Activated CD8-positive, alpha-beta T cell treated with anti-CD3 and anti-CD28 coated beads, Interleukin-2, amount 10 ng/mL, durations not matched to agents 7 days and 5 days (primary cell): ENCODE measurements at regions of chr9 and their contacts with region 1.

Region 1: GRCh38 chr9:19085295-19085694 is 17.4 kb downstream of the HAUS6 start:
- DNase-seq: no peak
- ATAC-seq: peak; percentile 80
- H3K4me3 Mint-ChIP-seq: no peak overlapping the region
- H3K27ac Mint-ChIP-seq: no peak overlapping the region
- H3K4me1 Mint-ChIP-seq: no peaks in the 10 kb centered on the region
- H3K27me3 Mint-ChIP-seq: no peaks in the 10 kb centered on the region

Region 2: GRCh38 chr9:19252174-19252884 is 167.0 kb after region 1 on chr9:
- CTCF ChIA-PET with region 1: no interaction called
- POLR2A ChIA-PET with region 1: no interaction called
- DNase-seq: no peak
- ATAC-seq: no peak
- H3K4me3 Mint-ChIP-seq: no peak overlapping the region
- H3K27ac Mint-ChIP-seq: no peak overlapping the region
- H3K4me1 Mint-ChIP-seq: peaks cover 18% of the 10 kb centered on the region
- H3K27me3 Mint-ChIP-seq: no peaks in the 10 kb centered on the region

Region 3: DNA sequence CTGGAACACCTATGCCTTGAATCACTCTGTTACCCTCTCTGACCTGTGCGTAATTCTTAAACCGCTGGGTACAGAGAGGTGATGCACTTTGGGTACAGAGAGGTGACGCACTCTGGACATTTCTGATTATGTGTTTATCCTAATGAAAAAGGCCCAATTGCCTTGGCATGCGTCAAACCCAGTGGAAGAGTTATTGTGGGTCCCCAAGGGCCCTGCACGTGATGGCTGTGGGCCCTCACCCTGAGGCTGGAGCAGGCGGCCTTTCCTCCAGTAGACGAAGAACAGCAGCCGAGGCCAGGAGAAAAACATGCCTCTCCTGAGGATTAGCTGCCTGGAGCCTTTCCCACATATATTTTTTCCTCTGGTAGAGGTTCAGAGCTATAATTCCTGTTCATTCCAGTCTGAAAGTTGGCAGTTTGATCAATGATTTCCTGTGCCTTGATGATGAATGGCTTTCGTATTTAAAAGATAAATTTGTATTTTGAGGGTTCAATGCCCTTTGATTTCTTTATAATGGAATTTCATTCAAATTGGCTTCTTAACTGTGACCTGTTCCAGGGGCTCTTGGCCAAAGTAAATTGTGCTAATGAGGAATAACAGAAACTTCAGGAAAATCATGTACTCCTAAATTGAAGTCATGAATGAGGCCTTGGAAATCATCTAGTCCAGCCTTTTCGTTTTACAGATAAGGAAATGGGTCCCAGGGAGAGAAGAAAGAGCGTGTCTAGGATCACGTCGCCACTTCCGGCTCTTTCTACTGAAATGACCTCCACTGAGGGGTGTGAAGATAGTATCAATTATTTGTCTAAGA is 346.3 kb after region 1 on chr9:
- CTCF ChIA-PET with region 1: no interaction called
- POLR2A ChIA-PET with region 1: no interaction called
- DNase-seq: no peak
- ATAC-seq: no peak
- H3K4me3 Mint-ChIP-seq: no peak overlapping the region
- H3K27ac Mint-ChIP-seq: no peak overlapping the region
- H3K4me1 Mint-ChIP-seq: no peaks in the 10 kb centered on the region
- H3K27me3 Mint-ChIP-seq: no peaks in the 10 kb centered on the region

Region 4: DNA sequence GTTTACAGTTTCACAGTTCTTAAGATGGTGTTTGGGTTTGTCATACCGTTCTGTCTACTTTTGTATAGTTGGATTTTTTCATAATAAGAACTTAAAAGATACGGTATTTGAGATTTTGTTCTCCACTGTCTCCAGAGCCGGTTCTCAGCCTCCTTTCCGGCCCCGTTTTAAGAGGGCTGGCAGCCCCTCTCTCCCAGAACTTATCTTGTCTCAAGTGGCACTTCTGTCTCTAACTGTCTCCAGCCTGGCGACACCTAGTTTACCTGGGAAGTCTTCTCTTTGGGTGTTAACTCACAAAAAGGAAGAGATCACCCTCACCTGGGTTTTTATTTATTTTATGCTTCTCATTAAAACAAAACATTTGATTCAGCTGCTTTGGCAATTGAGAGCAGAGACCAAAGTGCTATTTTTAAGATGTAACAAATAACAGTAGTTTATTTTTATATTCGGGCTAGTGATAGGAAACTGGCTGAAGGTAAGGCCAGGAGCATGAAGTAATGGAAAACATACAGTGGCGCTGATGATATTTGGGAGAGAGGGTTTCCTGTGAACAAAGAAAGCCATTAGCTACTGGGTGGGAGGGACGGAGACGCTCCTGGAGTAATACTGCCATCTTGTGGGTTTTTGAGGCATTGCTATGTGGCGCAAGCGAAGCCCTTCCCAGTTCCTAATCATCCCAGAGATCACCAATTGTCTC is 371.8 kb after region 1 on chr9:
- CTCF ChIA-PET with region 1: interaction called, 15 read pairs
- POLR2A ChIA-PET with region 1: no interaction called
- DNase-seq: peak; percentile 75
- ATAC-seq: peak; percentile 85
- H3K4me3 Mint-ChIP-seq: peak overlapping the region; percentile 31
- H3K27ac Mint-ChIP-seq: no peak overlapping the region
- H3K4me1 Mint-ChIP-seq: peaks cover 16% of the 10 kb centered on the region
- H3K27me3 Mint-ChIP-seq: peaks cover 2% of the 10 kb centered on the region